Caco-2 (cell line): ENCODE measurements at regions of chr15 and their contacts with region 1.

Region 1: DNA sequence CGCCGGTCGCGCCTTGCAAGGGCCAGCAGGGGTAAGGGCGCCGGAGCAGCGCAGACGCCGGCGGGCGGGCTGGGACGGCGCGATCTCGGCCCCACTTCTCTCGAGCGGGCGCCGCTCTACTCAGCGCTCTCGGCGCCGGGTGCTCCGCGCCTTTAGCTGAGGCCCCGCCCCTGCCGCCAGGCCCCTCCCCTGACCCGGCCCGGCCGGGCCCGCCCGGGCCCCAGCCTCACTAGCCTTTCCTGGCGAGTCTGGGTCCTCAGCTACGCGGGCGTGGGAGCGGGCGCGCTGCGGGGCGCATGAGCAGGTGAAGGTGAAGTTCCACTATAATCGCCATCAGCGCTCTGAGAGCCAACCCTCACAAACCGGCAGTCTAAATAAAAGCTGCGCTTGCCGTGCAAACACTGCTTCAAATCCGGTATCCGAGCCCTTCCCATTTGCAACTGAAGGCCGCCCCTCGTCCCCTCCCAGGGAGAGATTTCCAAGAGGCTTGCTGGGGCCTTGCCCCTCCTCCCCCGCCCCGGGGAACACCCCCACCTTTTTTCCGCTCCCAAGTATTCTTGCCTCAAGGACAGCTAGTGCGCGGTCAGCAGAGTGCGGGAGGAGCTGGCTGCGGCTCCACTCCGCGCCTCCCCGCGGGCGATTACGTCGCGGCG is at the start of gene RPP25:
- DNase-seq: peak; percentile 88
- H3K4me3 ChIP-seq: peak within 1 kb of the TSS; percentile 56
- H3K4me3 Mint-ChIP-seq: peak within 1 kb of the TSS; percentile 87
- H3K27ac Mint-ChIP-seq: peak within 1 kb of the TSS; percentile 70
- H3K4me1 ChIP-seq: peaks cover 14% of the 10 kb centered on the region
- H3K4me1 Mint-ChIP-seq: no peaks in the 10 kb centered on the region
- H3K27me3 ChIP-seq: no peaks in the 10 kb centered on the region
- H3K27me3 Mint-ChIP-seq: no peaks in the 10 kb centered on the region
- CTCF ChIP-seq: no peak
- total RNA-seq, gene RPP25: 30.1 and 35.3 TPM in 2 replicates

Region 2: GRCh38 chr15:74988007-74988800 is 31.4 kb after region 1 on chr15:
- CTCF ChIA-PET with region 1: interaction called, 11 read pairs
- POLR2A ChIA-PET with region 1: no interaction called
- intact Hi-C with region 1: loop called (anchors 1 kb)
- DNase-seq: peak; percentile 72 to 78
- H3K4me3 ChIP-seq: no peak overlapping the region
- H3K4me3 Mint-ChIP-seq: no peak overlapping the region
- H3K27ac Mint-ChIP-seq: no peak overlapping the region
- H3K4me1 ChIP-seq: no peaks in the 10 kb centered on the region
- H3K4me1 Mint-ChIP-seq: peaks cover 7% of the 10 kb centered on the region
- H3K27me3 ChIP-seq: peaks cover 1% of the 10 kb centered on the region; the same call in 1 of the 2 replicates
- H3K27me3 Mint-ChIP-seq: peaks cover 20% of the 10 kb centered on the region
- CTCF ChIP-seq: peak; percentile 62 to 84

Region 3: DNA sequence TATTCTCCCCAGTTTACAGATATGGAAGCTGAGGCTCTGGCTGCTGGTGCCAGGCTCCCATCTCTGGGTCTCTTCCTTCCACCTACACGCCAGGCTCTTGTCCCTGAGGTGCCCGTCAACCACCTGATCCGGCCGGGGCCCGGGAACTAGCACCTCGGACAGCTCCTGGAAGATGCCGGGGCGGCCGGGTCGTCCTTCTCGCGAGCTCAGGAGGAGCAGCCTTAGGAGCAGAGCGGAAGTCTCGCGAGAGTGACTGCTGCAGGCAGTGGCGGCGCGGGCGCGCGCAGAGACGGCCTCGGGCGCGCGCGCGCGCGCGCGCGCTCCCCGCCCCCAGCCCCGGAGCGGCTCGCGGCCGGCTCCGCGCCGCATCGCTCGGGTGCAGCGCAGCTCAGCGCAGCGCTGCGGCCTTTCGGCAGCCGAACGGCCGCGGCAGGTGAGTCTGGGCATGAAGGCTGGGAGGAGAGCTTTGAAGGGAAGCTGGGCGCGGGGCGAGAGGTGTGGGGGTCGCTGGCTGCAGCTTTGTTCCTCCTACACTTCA is 38.5 kb after region 1 on chr15 and contains the start of gene SCAMP5:
- CTCF ChIA-PET with region 1: interaction called, 3 read pairs
- POLR2A ChIA-PET with region 1: interaction called, 12 read pairs
- intact Hi-C with region 1: no loop called
- DNase-seq: peak; percentile 95 to 97
- H3K4me3 ChIP-seq: peak within 1 kb of the TSS; percentile 75
- H3K4me3 Mint-ChIP-seq: peak within 1 kb of the TSS; percentile 67
- H3K27ac Mint-ChIP-seq: no peak within 1 kb of the TSS
- H3K4me1 ChIP-seq: 0 out of 2 replicates have a peak, but pooled peaks cover 2% of the 10 kb centered on the region
- H3K4me1 Mint-ChIP-seq: peaks cover 10% of the 10 kb centered on the region
- H3K27me3 ChIP-seq: peaks cover 1% of the 10 kb centered on the region; the same call in 1 of the 2 replicates
- H3K27me3 Mint-ChIP-seq: peaks cover 9% of the 10 kb centered on the region
- CTCF ChIP-seq: no peak
- total RNA-seq, gene SCAMP5: 9.2 and 11.8 TPM in 2 replicates

Region 4: GRCh38 chr15:75483961-75484360 is 527.2 kb after region 1 on chr15:
- CTCF ChIA-PET with region 1: no interaction called
- POLR2A ChIA-PET with region 1: no interaction called
- intact Hi-C with region 1: no loop called
- DNase-seq: no peak
- H3K4me3 ChIP-seq: no peak overlapping the region
- H3K4me3 Mint-ChIP-seq: no peak overlapping the region
- H3K27ac Mint-ChIP-seq: no peak overlapping the region
- H3K4me1 ChIP-seq: no peaks in the 10 kb centered on the region
- H3K4me1 Mint-ChIP-seq: no peaks in the 10 kb centered on the region
- H3K27me3 ChIP-seq: no peaks in the 10 kb centered on the region
- H3K27me3 Mint-ChIP-seq: no peaks in the 10 kb centered on the region
- CTCF ChIP-seq: no peak